GM10248 (cell line): ENCODE measurements at regions of chr14 and their contacts with region 1.

Region 1: DNA sequence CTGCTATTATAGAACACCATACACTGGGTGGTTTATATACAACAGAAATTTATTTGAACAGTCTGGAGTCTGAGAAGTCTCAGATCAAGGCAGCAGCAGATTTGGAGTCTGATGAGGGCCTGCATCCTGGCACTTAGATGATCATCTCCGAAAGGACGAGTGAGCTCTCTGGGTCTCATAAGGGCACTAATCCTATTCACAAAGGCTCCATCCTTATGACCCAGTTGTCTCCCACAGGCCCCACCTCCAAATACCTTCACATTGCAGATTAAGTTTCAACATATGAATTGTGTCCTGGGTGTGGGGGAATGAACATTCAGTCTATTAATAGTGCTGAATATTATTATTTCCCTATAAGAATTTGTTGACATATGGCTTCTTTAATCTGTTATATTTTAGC is 53.6 kb downstream of the FBXO34 start:
- DNase-seq: no peak
- CTCF ChIP-seq: no peak

Region 2: GRCh38 chr14:55309761-55310365 is 14.9 kb before region 1 on chr14:
- CTCF ChIA-PET with region 1: interaction called, 10 read pairs
- POLR2A ChIA-PET with region 1: no interaction called
- DNase-seq: no peak
- CTCF ChIP-seq: no peak

Region 3: DNA sequence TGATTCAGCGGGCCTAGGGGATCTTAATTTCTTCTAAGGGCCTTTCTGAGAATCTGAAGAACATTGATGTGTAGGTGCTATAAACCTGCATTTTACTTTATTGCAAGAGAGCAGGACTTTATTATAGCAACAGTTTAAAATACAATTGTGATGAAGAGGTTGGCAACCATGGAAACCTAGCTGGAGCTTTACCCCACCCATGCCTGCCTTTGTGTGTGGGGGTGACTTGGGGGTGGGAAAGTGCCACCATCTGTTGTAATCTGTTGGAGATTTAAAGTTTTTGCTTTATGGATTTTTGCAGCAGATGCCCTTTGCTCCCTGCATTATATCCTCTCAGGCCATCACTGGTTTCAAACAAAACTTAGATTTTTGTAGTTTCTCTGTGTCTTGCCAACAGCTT is 22.2 kb after region 1 on chr14:
- CTCF ChIA-PET with region 1: no interaction called
- POLR2A ChIA-PET with region 1: no interaction called
- DNase-seq: no peak
- CTCF ChIP-seq: no peak